Panc1 (cell line): ENCODE measurements at regions of chr2 and their contacts with region 1.

Region 1: DNA sequence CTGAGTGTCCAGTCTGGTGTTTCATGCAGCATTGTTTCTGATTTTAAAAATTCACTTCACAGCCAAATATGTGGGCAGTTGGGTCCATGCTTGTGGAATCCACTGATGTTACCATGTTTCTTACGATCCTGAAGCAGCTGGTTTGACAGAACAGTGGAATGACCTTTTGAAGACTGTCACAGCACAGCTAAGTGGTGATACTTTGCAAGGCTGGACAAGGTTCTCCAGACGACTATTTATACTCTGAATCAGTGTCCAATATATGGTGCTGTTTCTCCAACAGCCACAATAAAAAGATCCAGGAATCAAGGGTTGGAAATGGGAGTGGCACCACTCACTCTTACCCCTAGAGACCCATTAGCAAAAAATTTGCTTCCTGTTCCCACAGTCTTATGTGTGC is 577.4 kb upstream of the RAB6C start:
- DNase-seq: no peak
- ATAC-seq: no peak
- H3K4me3 ChIP-seq: no peak overlapping the region
- H3K27ac ChIP-seq: no peak overlapping the region
- H3K4me1 ChIP-seq: no peaks in the 10 kb centered on the region
- H3K27me3 ChIP-seq: no peaks in the 10 kb centered on the region
- CTCF ChIP-seq: no peak

Region 2: GRCh38 chr2:128970332-128971116 is 431.6 kb before region 1 on chr2:
- CTCF ChIA-PET with region 1: no interaction called
- POLR2A ChIA-PET with region 1: interaction called, 11 read pairs
- in situ Hi-C with region 1: no loop called
- intact Hi-C with region 1: no loop called
- DNase-seq: no peak
- ATAC-seq: no peak
- H3K4me3 ChIP-seq: no peak overlapping the region
- H3K27ac ChIP-seq: no peak overlapping the region
- H3K4me1 ChIP-seq: no peaks in the 10 kb centered on the region
- H3K27me3 ChIP-seq: no peaks in the 10 kb centered on the region
- CTCF ChIP-seq: no peak

Region 3: DNA sequence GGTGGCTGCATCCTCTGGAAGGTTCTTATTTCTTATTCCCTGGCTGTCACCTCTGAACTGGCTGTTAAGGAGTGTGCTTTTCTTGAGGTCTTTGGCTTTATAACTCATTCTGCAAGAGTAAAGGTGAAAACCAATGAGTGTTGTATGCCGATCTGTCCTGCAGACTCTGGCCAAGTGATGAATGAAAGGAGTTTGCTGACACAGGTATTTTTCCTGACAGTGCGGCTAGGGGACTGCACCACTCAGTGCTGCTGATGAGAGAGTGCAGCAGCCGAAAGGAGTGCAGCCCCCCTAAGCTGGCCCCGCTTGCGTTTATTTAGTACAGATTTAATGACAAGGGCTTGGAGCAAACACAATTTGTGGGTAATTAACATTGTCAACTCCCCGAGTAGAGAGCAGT is 1920.1 kb after region 1 on chr2:
- CTCF ChIA-PET with region 1: no interaction called
- POLR2A ChIA-PET with region 1: no interaction called
- in situ Hi-C with region 1: no loop called
- intact Hi-C with region 1: no loop called
- DNase-seq: no peak
- ATAC-seq: no peak
- H3K4me3 ChIP-seq: no peak overlapping the region
- H3K27ac ChIP-seq: no peak overlapping the region
- H3K4me1 ChIP-seq: no peaks in the 10 kb centered on the region
- H3K27me3 ChIP-seq: peaks cover 2% of the 10 kb centered on the region
- CTCF ChIP-seq: no peak